Activated CD4-positive, alpha-beta T cell treated with anti-CD3 and anti-CD28 coated beads, Interleukin-2, amount 10 ng/mL, durations not matched to agents 7 days and 5 days (primary cell): ENCODE measurements at regions of chr15 and their contacts with region 1.

Region 1: GRCh38 chr15:78131295-78132061 is at the start of gene CIB2:
- DNase-seq: peak; percentile 74
- H3K4me3 Mint-ChIP-seq: peak within 1 kb of the TSS; percentile 74
- H3K27ac Mint-ChIP-seq: peak within 1 kb of the TSS; percentile 82
- H3K4me1 Mint-ChIP-seq: peaks cover 26% of the 10 kb centered on the region
- H3K27me3 Mint-ChIP-seq: no peaks in the 10 kb centered on the region
- total RNA-seq, gene CIB2: 0.44 to 0.55 TPM

Region 2: DNA sequence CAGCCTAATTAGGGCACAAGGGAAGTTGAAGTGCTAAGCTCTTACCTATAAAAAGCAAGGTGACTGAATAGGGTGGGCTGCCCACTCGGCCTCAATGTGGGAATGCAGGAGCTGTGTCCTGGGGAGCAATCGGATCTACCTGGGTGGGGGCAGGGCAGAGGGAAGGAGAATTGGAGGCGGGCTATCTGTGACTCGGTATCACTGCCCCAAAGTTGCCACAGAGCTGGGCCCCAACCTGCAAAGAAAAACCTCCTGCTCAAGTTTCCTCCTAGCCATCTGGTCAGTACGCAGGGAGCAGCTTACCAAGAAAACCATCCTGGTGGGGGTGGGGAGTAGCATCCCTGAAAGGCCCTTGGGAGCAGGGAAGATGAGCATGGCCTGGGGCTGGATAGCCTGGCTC is 11.0 kb before region 1 on chr15:
- CTCF ChIA-PET with region 1: interaction called, 15 read pairs
- POLR2A ChIA-PET with region 1: no interaction called
- DNase-seq: no peak
- H3K4me3 Mint-ChIP-seq: no peak overlapping the region
- H3K27ac Mint-ChIP-seq: no peak overlapping the region
- H3K4me1 Mint-ChIP-seq: peaks cover 2% of the 10 kb centered on the region
- H3K27me3 Mint-ChIP-seq: no peaks in the 10 kb centered on the region

Region 3: DNA sequence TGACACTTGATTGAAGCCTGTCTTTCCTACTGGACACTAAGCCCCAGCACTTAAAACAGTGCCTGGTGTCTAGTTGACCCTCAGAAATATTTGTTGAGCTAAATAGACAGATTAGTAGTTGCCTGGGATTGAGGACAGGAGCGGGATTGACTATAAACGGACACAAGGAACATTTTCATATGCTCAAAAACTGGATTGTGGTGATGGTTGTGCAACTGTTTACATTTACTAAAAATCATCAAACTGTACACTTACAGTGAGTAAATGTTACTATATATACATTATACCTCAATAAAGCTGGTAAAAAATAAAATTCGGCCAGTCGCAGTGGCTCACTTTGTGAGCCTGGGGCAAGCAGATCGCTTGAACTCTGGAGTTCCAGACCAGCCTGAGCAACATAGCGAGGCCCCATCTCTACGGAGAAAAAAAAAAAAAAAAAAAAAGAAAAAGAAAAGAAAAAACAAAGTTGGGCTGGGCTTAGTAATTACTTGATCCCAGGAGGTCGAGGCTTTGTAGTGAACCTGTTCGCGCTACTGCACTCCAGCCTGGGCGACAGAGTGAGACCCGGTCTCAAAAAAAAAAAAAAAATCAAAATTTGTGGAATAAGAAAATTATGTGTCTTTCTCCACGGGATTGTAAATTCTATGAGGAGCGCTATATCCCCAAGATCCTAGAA is 17.1 kb after region 1 on chr15:
- CTCF ChIA-PET with region 1: interaction called, 14 read pairs
- POLR2A ChIA-PET with region 1: no interaction called
- DNase-seq: no peak
- H3K4me3 Mint-ChIP-seq: peak overlapping the region; percentile 96
- H3K27ac Mint-ChIP-seq: peak overlapping the region; percentile 94
- H3K4me1 Mint-ChIP-seq: peaks cover 41% of the 10 kb centered on the region
- H3K27me3 Mint-ChIP-seq: no peaks in the 10 kb centered on the region

Region 4: DNA sequence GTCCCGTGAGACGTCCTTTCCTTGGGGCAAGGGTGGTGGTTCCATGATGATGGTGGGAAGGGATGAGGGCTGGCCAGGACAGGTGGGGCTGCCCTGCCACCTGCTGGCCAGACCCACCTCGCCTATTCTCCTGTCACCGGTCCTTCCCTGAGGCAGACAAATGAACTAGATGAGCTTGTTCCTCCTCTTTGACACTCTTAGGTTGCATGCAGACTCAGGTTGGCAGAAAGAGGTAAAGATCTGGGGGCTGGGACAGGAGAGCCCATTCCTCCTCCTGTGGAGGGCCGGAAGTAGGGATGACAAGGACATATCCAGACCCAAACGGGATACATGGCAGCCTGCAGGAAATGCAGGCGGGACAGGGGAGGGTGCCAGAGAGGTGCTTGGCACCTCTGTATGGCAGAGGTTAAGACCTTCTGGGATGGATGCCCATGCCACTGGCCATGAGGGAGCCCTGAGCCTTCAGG is 64.3 kb after region 1 on chr15:
- CTCF ChIA-PET with region 1: interaction called, 15 read pairs
- POLR2A ChIA-PET with region 1: no interaction called
- DNase-seq: peak; percentile 50
- H3K4me3 Mint-ChIP-seq: no peak overlapping the region
- H3K27ac Mint-ChIP-seq: no peak overlapping the region
- H3K4me1 Mint-ChIP-seq: no peaks in the 10 kb centered on the region
- H3K27me3 Mint-ChIP-seq: peaks cover 6% of the 10 kb centered on the region

Region 5: DNA sequence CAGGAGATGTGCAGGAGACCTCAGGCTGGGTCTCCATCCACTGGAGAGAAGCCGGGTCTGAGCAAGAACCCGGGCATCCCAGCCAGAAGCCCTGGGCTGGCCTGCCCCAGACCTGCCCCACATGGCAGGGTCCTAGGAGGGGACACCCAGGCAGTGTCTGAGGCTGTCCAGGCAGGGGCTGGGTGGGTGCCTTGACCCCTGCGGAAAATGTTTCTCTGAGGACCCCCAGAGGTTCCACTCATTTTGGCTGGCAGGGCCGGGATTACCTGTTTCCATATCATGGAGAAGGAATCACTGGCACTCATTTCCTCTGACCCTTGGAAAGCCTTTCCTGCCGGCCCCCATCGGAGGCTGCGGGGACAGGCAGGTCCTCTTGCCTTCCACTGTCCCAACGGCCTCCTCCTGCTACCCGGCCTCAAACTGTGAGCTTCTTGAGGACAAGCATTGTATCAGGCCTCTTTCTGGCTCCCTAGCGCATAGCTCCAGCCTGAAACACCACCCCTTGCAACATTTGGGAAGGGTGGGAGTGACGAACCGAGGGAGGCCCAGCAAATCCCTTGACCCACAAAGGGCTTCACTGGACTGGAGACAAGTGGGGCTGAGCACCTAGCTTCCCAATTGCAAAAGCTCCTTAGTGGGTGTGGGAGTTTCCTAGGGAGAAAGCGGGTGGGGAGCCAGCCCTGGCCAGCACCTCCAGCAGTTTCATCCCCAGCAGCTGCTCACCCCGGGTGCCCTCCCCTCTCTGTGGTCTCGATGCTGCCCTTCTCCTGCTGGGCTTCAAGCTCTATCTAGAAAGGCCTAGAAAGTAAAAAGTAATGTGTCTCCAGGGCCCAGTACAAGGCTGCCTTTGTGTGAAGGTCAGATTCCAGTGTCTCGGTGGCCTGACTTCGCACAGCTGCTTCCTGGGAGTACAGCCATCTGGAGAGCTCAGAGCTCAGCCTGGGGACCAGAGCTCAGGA is 73.2 kb after region 1 on chr15:
- CTCF ChIA-PET with region 1: interaction called, 10 read pairs
- POLR2A ChIA-PET with region 1: no interaction called
- DNase-seq: peak; percentile 3
- H3K4me3 Mint-ChIP-seq: no peak overlapping the region
- H3K27ac Mint-ChIP-seq: no peak overlapping the region
- H3K4me1 Mint-ChIP-seq: no peaks in the 10 kb centered on the region
- H3K27me3 Mint-ChIP-seq: peaks cover 2% of the 10 kb centered on the region

Region 6: GRCh38 chr15:78291716-78292115 is 160.2 kb after region 1 on chr15:
- CTCF ChIA-PET with region 1: no interaction called
- POLR2A ChIA-PET with region 1: no interaction called
- DNase-seq: no peak
- H3K4me3 Mint-ChIP-seq: no peak overlapping the region
- H3K27ac Mint-ChIP-seq: no peak overlapping the region
- H3K4me1 Mint-ChIP-seq: no peaks in the 10 kb centered on the region
- H3K27me3 Mint-ChIP-seq: no peaks in the 10 kb centered on the region

Region 7: DNA sequence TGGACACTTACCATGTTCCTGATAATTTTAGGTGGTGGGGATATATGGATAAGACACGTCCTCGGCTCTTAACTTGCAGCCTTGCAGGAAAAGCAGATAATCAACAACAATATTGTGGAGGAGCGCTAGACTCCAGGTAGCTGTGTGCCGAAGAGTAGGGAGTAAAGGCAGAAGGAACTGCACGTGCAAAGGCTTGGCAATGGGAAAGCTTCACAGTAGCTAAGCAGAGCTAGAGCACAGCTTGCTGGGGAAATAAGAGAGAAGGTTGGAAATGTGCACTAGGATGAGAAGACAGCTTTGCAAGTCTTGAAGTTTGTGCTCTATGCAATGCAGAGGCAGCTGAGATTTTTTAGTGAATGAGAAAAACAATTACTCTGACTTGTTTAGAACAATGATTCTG is 421.1 kb after region 1 on chr15:
- CTCF ChIA-PET with region 1: no interaction called
- POLR2A ChIA-PET with region 1: no interaction called
- DNase-seq: no peak
- H3K4me3 Mint-ChIP-seq: no peak overlapping the region
- H3K27ac Mint-ChIP-seq: no peak overlapping the region
- H3K4me1 Mint-ChIP-seq: no peaks in the 10 kb centered on the region
- H3K27me3 Mint-ChIP-seq: no peaks in the 10 kb centered on the region